ENCODE measurements at regions of chr2 and their contacts with region 1.

Region 1: DNA sequence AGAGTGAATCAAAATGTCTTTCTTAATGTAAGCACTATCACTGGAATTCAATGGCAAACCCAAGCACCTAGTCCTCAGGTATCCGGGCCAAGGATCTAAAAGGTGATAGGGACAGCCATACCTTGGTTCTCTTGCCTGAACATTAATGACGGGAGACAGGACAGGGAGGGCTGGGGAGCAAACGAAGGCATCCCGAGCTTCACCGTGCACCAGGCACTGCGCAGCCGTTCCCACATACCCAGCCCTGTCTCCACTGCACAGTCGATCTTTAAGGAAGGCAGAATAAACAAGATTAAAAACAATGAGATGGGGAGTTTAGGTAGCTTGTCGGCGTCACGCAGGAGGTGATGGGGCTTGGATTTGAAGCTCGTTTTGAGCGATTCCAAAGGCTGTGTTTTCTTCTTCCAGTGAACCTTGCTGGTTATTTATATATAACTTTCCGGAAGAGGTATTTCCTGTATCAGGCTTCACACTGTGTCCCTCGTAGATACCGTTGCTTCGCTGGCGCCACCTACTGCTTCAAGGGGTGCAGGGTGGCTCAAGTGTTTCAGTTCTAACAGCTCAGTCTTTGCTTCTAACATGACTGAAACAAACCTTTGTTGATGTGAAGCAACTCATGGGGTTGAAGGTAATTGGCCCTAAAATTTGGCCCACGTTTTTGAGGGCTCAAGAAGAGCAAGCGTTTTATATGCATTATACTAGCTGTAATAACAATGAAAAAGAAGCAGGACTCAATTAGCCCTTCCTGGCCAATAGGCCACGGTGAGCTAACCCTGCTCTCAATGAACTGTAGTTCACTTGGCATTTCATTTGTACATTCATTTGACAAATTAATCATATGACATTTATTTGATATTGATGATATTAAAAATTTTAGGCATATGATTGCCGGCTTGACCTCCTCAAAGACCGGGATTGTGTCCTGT is 77.4 kb downstream of the DCDC2C start:
- DNase-seq: peak; percentile 81
- H3K4me3 Mint-ChIP-seq: no peak overlapping the region
- H3K27ac Mint-ChIP-seq: no peak overlapping the region
- H3K4me1 Mint-ChIP-seq: peaks cover 10% of the 10 kb centered on the region
- H3K27me3 Mint-ChIP-seq: peaks cover 7% of the 10 kb centered on the region

Region 2: GRCh38 chr2:3728104-3729054 is 52.4 kb before region 1 on chr2:
- CTCF ChIA-PET with region 1: interaction called, 57 read pairs
- POLR2A ChIA-PET with region 1: no interaction called
- intact Hi-C with region 1: loop called (anchors 1 kb)
- DNase-seq: no peak
- H3K4me3 Mint-ChIP-seq: no peak overlapping the region
- H3K27ac Mint-ChIP-seq: no peak overlapping the region
- H3K4me1 Mint-ChIP-seq: no peaks in the 10 kb centered on the region
- H3K27me3 Mint-ChIP-seq: peaks cover 6% of the 10 kb centered on the region

Region 3: GRCh38 chr2:3738454-3738853 is 42.3 kb before region 1 on chr2:
- CTCF ChIA-PET with region 1: interaction called, 5 read pairs
- POLR2A ChIA-PET with region 1: no interaction called
- intact Hi-C with region 1: loop called (anchors 2 kb)
- DNase-seq: peak; percentile 16
- H3K4me3 Mint-ChIP-seq: no peak overlapping the region
- H3K27ac Mint-ChIP-seq: no peak overlapping the region
- H3K4me1 Mint-ChIP-seq: no peaks in the 10 kb centered on the region
- H3K27me3 Mint-ChIP-seq: peaks cover 16% of the 10 kb centered on the region